HEK293 (cell line): ENCODE measurements at regions of chr6 and their contacts with region 1.

Region 1: GRCh38 chr6:160930547-160931377 is 60.8 kb upstream of the MAP3K4 start:
- H3K4me3 ChIP-seq: peak overlapping the region; percentile 32
- H3K27ac ChIP-seq: no peak overlapping the region
- H3K4me1 ChIP-seq: no peaks in the 10 kb centered on the region
- CTCF ChIP-seq: peak; percentile 91

Region 2: DNA sequence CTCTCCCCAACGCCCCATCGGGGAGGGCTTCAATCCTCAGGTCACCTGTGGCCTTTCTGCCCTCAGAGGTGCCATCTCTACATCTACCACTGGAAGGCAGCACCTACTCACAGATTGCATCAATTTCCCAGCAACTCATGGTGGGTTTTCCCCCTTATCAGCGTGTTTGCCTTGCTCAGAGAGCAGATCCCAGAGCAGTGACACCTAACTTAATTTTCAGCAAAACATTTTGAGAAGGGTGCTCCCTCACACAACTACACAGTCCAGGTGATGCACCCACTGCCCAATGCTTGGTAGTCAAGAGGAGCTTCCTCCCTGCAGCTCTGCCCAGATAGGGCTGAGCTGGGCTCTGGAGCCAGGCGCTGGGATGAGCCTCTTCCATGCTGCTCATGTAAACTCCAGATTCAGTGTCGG is 180.5 kb before region 1 on chr6:
- CTCF ChIA-PET with region 1: interaction called, 12 read pairs
- POLR2A ChIA-PET with region 1: no interaction called
- H3K4me3 ChIP-seq: no peak overlapping the region
- H3K27ac ChIP-seq: no peak overlapping the region
- H3K4me1 ChIP-seq: no peaks in the 10 kb centered on the region
- CTCF ChIP-seq: peak; percentile 69

Region 3: DNA sequence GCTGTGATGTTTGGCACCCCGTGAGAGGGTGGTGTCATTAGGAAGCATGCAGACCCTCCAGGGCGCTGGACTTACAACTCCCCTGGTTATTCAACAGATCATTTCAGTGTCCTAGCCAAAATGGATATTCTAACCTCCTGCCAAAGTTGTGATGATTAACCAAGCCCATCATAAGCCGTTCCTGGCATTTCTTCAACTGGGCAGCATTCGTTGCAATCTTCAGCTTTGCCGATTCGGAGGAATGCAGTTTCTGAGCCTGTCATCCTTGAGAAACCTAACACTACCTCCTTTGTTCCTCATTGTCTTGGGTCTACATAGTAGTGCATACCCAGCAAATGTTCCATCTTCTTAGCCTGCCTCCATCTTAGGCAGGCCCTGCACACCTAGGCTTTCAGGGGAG is 18.4 kb before region 1 on chr6:
- CTCF ChIA-PET with region 1: interaction called, 10 read pairs
- POLR2A ChIA-PET with region 1: no interaction called
- H3K4me3 ChIP-seq: no peak overlapping the region
- H3K27ac ChIP-seq: no peak overlapping the region
- H3K4me1 ChIP-seq: no peaks in the 10 kb centered on the region
- CTCF ChIP-seq: no peak

Region 4: DNA sequence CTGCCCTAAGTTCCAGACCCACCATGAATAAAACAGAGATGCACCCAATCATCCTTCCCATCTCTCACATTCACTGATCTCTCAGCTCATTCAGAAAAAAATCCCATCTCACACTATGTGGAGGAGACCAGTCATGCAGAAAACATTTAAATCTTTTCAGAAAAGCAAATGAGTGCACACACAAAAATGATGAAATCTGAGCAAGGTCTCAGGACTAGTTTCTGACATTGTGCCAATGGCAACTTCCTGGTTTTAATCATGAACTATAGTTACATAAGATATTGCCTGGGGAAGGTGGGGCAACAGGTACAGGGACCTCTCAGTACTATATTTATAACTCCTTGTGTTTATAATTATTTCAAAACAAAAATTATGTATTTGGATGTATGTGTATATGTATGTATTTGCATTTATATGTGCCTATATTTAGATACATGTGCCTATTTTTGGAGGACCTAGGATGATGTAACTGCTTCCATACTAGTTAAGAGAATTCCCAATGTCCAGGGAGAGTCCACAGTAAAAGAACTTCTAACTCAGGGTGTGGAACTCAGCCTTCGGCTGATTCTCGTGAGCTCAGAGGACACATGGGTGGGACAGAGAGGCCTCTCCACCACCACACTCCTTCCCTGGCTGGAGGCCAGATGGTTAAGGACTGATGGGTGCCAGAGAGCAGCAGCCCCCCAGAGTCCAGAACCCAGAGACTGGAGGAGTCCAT is 10.9 kb before region 1 on chr6:
- CTCF ChIA-PET with region 1: interaction called, 20 read pairs
- POLR2A ChIA-PET with region 1: no interaction called
- H3K4me3 ChIP-seq: no peak overlapping the region
- H3K27ac ChIP-seq: no peak overlapping the region
- H3K4me1 ChIP-seq: no peaks in the 10 kb centered on the region
- CTCF ChIP-seq: no peak

Region 5: GRCh38 chr6:160949531-160949930 is 18.8 kb after region 1 on chr6:
- CTCF ChIA-PET with region 1: interaction called, 24 read pairs
- POLR2A ChIA-PET with region 1: no interaction called
- H3K4me3 ChIP-seq: no peak overlapping the region
- H3K27ac ChIP-seq: no peak overlapping the region
- H3K4me1 ChIP-seq: 0 out of 2 replicates have a peak, but pooled peaks cover 4% of the 10 kb centered on the region
- CTCF ChIP-seq: no peak

Region 6: DNA sequence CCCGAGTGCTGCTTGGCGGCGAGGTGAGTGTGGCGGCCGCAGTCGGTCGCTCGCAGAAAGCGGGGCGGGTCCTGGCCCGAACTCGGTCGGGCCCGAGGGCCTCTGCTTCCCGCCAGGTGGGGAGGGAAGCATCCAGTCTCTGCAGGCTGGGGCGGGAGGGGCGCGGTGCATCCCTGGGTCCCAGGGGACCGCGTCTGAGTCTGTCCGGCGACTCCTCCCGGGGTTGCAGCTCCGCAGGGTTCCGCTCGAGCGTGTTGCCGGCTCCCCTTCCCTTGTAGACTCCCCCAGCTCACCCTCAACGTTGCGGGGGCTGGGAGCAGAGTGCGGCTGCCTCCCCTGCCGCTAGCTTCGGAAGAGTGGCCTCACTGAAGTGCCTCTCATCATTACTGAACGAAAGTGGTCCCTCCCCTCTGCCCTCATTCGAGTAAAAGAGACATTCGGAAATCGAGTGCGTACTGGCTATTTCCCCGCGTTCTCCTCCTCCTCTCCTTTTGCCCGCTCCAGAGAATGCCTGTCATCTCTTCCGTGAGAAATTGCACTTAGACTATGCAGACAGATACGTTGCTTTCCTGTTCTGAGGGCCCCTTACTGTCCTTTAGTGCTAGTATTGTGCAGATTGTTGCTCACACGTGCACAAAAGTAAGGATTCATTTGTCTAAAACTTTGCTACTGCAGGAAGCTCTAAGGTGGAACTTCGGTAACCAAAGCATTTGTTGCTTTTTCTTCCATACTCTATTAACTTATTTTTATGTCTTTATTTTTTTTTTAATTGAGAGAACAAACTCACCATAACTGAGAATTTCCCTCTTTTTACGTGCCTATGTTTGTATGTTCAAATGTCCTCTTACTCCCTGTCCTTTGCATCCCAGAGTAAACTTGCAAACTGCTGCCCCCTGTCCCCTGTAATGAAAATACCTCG is 61.6 kb after region 1 on chr6:
- CTCF ChIA-PET with region 1: interaction called, 50 read pairs
- POLR2A ChIA-PET with region 1: interaction called, 5 read pairs
- H3K4me3 ChIP-seq: peak overlapping the region; percentile 99
- H3K27ac ChIP-seq: peak overlapping the region; percentile 93
- H3K4me1 ChIP-seq: peaks cover 5% of the 10 kb centered on the region
- CTCF ChIP-seq: peak; percentile 60

Region 7: GRCh38 chr6:161101517-161101916 is 170.8 kb after region 1 on chr6:
- CTCF ChIA-PET with region 1: interaction called, 10 read pairs
- POLR2A ChIA-PET with region 1: no interaction called
- H3K4me3 ChIP-seq: no peak overlapping the region
- H3K27ac ChIP-seq: no peak overlapping the region
- H3K4me1 ChIP-seq: no peaks in the 10 kb centered on the region
- CTCF ChIP-seq: no peak